Psoas muscle (tissue), 8 donors: ENCODE measurements at regions of chr2 and their contacts with region 1.

Region 1: DNA sequence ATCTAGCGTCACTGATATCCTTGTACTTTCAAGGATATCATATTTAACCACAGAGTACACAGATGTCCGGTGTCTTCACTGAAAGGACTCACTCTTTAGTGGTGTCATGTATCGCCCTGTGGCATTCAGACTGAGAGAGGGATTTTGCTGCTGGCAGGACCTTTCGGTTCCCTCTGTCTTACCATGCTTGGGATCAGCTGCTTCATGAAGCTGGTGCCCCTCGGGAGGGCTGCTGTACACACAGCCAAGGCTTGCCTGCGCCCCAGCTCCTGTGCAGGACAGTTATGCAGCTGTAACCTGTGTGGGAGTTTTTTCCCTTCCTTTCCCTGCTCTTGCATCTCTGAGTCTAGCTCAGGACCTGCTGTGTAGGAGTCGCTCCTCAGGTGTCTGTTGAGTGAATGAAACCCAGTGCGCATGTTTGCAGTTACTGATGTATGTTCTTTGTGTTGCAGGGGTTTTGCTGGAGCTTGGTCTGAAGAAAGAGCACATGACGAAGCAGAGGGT is 64.4 kb downstream of the GREB1 start:
- DNase-seq: peak; percentile 47 to 67
- ATAC-seq: peak; percentile 95 to 96 (median 96)
- H3K4me3 ChIP-seq: no peak overlapping the region
- H3K27ac ChIP-seq: peak overlapping the region; percentile 74
- H3K4me1 ChIP-seq: peaks cover 19% of the 10 kb centered on the region
- H3K27me3 ChIP-seq: no peaks in the 10 kb centered on the region
- CTCF ChIP-seq: no peak

Region 2: DNA sequence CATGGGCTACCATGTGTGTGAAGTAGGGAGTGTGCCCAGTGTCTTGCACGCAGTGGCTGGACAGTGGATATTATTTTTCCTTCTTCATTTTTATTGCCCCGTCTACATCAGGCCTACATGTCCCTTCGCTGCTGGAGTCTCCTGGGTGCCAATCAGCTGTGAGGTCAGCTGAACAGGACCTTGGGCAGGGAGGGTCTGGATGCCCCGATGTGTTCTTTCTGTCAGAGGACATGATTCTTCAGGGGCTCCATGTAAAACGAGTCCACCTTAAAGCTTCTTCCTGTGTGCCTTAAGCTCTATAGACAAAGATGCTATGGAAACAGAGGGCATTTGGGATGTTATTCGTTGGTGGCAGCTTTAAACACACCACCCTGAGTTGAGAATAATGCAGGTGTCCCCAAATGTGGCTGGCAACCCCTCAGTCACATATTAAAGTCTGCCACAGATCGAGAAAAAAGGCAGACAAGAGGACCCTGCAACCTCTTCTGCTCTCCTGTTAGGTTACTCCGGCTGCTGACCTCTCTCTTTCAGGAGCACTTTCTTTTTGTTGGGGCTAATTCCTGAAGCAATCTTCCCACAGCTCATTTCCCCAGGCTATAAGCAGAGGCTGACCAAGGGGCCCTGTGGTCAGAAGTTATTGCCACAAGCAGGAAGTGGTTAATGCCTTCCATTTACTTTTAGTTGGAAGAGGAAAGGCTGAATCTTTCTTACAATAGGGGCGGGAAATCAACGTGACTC is 44.5 kb before region 1 on chr2:
- intact Hi-C with region 1: no loop called
- DNase-seq: no peak
- ATAC-seq: no peak
- H3K4me3 ChIP-seq: no peak overlapping the region
- H3K27ac ChIP-seq: no peak overlapping the region
- H3K4me1 ChIP-seq: peaks cover 11% of the 10 kb centered on the region
- H3K27me3 ChIP-seq: no peaks in the 10 kb centered on the region
- CTCF ChIP-seq: no peak

Region 3: DNA sequence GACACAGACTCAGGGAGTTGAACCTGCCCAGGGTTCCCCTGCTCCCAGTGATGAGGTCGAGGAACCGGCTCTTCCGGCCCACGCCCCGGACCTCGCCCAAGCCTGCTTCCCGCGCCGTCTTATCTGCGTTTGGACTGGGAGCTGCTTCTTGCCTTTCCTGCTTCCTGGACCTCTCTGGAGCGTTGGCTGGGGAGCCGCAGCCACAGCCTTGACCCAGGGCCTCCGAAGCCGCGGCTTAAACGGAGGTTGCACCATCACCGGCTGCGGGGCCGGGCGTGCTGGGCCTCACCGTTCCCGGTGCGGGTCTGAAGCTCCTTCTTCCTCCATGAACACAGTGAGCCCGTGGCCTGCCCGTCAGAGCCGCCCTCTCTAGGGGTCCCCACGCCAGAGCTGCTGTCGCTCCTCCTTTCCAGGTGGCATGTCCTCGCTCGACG is 58.4 kb after region 1 on chr2:
- intact Hi-C with region 1: loop called in 1 of 2 experiments (anchors 5 kb)
- DNase-seq: no peak
- ATAC-seq: no peak
- H3K4me3 ChIP-seq: no peak overlapping the region
- H3K27ac ChIP-seq: no peak overlapping the region
- H3K4me1 ChIP-seq: peaks cover 11% of the 10 kb centered on the region
- H3K27me3 ChIP-seq: no peaks in the 10 kb centered on the region
- CTCF ChIP-seq: no peak

Region 4: DNA sequence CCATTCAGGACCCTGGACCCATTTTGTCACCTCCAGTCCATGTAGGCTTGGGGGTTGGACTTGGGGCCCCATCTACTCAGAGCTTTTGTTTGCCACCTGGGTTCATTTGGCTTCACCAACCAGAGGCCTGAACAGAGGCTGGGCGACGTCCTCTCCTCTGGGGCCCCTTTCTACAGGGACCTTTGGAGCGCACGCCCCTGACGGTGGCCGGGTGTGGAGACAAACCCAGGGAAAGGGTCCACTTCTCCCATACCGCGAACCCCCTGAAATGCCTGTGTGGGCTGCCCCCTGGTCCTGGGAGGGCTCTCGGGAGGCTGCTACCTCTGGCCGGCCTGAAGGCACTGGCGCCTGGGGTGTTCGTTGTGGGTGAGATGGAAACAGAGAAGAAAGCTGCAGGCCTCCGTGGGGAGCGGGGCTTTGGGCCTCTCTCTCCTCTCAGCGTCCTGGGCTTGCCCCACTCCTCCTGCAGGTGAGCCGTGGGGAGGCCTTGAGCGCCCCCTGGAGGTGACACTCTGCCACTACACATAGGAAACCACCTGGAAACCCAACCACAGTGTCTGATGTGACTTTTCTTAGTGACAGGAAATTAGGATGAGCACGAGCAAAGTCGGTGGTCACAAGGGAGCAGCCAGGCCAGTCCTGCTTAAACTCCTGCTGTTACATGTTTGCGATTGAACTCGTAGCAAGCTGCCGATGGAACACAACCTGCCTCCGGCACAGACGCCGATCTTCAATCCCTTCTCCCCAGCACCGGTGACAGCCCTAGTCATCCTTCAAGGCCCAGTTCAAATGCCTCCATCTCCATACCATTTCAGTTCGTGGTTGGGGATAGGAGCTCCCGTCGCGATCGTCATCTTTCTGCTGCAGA is 83.7 kb after region 1 on chr2:
- intact Hi-C with region 1: loop called (anchors 5 kb)
- DNase-seq: peak; percentile 46 to 86
- ATAC-seq: peak; percentile 66 to 75 (median 71)
- H3K4me3 ChIP-seq: no peak overlapping the region
- H3K27ac ChIP-seq: peak overlapping the region; percentile 83
- H3K4me1 ChIP-seq: peaks cover 71% of the 10 kb centered on the region
- H3K27me3 ChIP-seq: no peaks in the 10 kb centered on the region
- CTCF ChIP-seq: peak; percentile 93